K562 (cell line): ENCODE measurements at regions of chr9 and their contacts with region 1.

Region 1: DNA sequence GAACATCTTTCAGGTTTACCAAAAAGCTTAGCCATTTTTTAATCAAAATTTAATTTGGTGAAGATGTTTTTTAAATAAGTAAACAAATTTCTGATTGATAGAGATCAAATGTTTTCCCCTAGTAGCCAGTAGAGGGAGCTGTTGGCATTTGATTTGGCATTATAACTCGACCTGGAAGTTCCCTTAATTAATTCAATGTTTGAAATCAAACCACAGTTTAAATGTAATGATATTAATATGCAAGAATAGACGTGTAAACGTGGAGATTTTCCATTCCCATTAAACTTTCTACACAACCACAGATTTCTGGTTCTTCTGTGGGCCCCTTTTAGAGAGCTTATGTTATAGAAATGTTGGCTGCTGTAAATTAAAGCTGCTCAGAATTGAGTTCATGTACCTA is 148.1 kb upstream of the MPDZ start:
- DNase-seq: peak; percentile 11 to 37 (median 22)
- ATAC-seq: no peak
- H3K4me3 ChIP-seq: no peak overlapping the region
- H3K27ac ChIP-seq: no peak overlapping the region
- H3K4me1 ChIP-seq: no peaks in the 10 kb centered on the region
- H3K27me3 ChIP-seq: no peaks in the 10 kb centered on the region
- CTCF ChIP-seq: peak in 2 of 3 experiments; percentile 44 to 63; a peak in 4 of 6 replicates
- EP300 ChIP-seq: no peak
- POLR2A ChIP-seq: no peak
- RAD21 ChIP-seq: peak; percentile 63 to 71

Region 2: DNA sequence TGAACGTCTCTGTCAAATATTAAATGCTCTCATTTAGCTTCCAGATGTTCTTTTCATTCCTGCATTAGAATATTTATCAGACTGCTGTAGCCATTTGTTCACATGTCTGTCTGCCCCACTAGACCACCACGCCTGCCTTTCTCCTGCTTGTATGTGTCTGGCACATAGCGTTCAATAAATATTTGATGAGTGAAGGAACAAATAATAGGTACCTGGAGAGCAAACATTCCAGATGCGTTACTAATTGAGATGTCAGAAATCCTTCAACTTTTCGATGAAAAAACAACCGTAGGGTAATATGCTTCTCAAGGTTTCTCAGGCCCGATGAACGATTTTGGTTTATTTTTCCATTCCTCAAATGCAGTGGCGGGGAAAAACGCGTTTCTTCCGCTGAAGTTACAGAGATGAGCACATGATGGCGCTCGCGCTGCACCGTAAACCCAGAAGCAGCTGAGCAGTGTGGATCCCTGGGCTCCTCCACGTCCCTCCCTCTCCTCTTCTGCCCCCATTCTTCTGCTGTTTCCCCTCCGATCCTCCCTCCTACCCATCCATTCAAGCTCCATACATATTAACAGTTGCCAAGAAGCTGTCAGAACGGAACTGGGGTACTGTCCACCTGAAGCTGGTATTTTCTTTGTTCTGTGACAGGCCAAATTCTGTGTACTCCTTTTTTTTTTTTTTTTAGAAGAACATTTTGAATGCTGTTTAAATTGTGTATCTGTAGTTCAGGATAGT is 393.5 kb before region 1 on chr9:
- CTCF ChIA-PET with region 1: no interaction called
- POLR2A ChIA-PET with region 1: no interaction called
- in situ Hi-C with region 1: no loop called
- intact Hi-C with region 1: loop called (anchors 10 kb)
- DNase-seq: peak; percentile 43 to 66 (median 54)
- ATAC-seq: peak; percentile 91
- H3K4me3 ChIP-seq: no peak overlapping the region
- H3K27ac ChIP-seq: no peak overlapping the region
- H3K4me1 ChIP-seq: no peaks in the 10 kb centered on the region
- H3K27me3 ChIP-seq: no peaks in the 10 kb centered on the region
- CTCF ChIP-seq: peak; percentile 60 to 75 (median 70)
- EP300 ChIP-seq: no peak
- POLR2A ChIP-seq: no peak
- RAD21 ChIP-seq: peak; percentile 64 to 75

Region 3: GRCh38 chr9:13513716-13514444 is 86.3 kb after region 1 on chr9:
- CTCF ChIA-PET with region 1: no interaction called
- POLR2A ChIA-PET with region 1: no interaction called
- in situ Hi-C with region 1: no loop called
- intact Hi-C with region 1: no loop called
- DNase-seq: peak in 1 of 4 experiments; percentile 2
- ATAC-seq: peak; percentile 56
- H3K4me3 ChIP-seq: no peak overlapping the region
- H3K27ac ChIP-seq: no peak overlapping the region
- H3K4me1 ChIP-seq: no peaks in the 10 kb centered on the region; a peak in 1 of 5 replicates
- H3K27me3 ChIP-seq: no peaks in the 10 kb centered on the region
- CTCF ChIP-seq: no peak
- EP300 ChIP-seq: no peak
- POLR2A ChIP-seq: no peak
- RAD21 ChIP-seq: no peak

Region 4: DNA sequence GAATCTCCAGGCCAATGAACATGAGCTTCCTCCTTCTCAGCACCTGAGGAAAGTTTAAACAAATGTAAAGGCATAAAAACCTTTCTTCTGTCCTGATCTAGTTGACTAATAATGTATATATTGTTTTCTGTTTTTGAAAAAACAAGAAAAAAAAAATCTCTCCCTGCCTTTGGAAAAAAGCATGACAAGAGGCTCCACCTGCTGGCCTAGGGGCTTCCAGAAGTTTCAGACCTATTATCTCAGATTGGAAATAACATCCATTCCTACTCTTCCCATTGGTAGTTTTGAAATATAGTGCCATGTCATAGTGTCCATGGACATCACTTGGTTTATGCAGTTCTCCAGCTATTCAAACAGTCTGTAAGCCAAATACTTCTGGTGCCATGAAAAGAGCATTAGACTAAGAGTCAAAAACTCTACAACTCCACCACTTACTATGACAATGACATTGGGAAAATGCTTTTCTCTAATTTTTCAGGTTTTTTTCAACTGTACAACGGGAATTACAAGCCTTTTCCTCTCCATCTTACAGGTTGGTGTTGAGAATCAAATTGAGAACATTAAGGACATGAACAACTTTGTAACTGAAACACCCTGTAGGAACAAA is 261.5 kb after region 1 on chr9:
- CTCF ChIA-PET with region 1: interaction called, 3 read pairs
- POLR2A ChIA-PET with region 1: no interaction called
- in situ Hi-C with region 1: no loop called
- intact Hi-C with region 1: loop called (anchors 5 kb)
- DNase-seq: peak in 2 of 4 experiments; percentile 7 to 8
- ATAC-seq: no peak
- H3K4me3 ChIP-seq: no peak overlapping the region
- H3K27ac ChIP-seq: no peak overlapping the region
- H3K4me1 ChIP-seq: no peaks in the 10 kb centered on the region
- H3K27me3 ChIP-seq: no peaks in the 10 kb centered on the region
- CTCF ChIP-seq: peak in 1 of 3 experiments; percentile 36; a peak in 1 of 6 replicates
- EP300 ChIP-seq: no peak
- POLR2A ChIP-seq: no peak
- RAD21 ChIP-seq: peak; percentile 15 to 26; a peak in 1 of 4 replicates

Region 5: DNA sequence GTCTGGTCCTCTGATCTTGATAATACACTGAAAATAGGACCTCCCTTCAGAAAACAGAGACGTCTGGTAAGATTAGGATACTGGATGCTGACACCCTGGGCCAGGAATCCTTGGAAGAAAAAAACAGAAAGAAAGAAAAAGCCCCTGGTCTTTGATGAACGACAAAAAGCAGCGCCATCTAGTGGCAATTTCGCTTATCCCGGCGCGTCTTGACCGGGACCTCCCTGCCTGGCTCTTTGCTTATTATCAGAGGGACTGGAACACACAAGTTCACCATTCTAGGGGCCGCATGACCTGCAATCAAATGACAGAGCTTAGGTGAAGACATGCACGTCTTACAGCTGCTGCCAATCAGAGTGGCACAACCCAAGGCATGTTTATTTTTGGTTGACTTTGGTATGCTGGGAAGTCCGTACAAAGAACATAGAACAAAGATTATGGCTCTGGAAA is 1001.2 kb after region 1 on chr9:
- CTCF ChIA-PET with region 1: no interaction called
- POLR2A ChIA-PET with region 1: no interaction called
- in situ Hi-C with region 1: loop called (anchors 25 kb)
- intact Hi-C with region 1: loop called (anchors 2 kb)
- DNase-seq: peak; percentile 50 to 78 (median 58)
- ATAC-seq: peak; percentile 87
- H3K4me3 ChIP-seq: no peak overlapping the region
- H3K27ac ChIP-seq: no peak overlapping the region
- H3K4me1 ChIP-seq: peaks cover 0 to 19% of the 10 kb centered on the region in 2 experiments; a peak in 3 of 5 replicates
- H3K27me3 ChIP-seq: no peaks in the 10 kb centered on the region
- CTCF ChIP-seq: peak; percentile 56 to 76 (median 63)
- EP300 ChIP-seq: no peak
- POLR2A ChIP-seq: no peak
- RAD21 ChIP-seq: peak in 1 of 2 experiments; percentile 45; a peak in 2 of 4 replicates